Right cardiac atrium (tissue), 5 donors: ENCODE measurements at regions of chr19 and their contacts with region 1.

Region 1: DNA sequence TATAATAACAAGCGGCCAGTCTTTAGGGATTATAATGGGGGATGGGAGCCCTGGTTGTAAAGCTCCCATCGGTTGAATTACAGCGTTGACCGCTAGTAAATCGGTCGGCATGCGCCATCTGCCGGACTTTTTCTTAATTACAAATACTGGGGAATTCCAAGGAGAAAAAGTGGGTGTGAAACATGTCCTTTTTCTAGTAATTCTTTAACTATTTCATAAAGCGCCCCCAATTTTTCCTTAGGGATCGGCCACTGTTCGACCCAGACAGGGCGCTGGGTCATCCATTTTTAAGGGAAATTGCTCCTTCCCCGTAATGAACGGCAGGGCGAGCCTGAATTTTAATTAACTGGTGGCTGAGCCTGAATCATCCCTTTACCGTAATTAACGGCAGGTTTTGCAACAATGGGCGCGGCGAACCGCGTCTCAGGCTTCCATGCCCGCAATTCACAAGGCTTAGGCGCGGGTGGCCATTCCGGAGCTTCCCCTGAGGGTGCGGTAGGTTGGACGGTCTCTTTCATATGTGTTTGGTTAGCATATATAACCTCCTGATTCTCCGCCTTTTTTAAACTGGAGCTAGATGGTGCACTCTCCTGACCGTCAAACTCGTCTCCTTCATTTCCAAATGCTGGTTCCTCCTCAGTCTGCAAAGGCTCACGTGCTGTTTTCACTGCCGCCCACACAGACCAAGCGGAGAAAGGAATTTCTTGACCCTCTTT is 30.2 kb upstream of the EVI5L start:
- DNase-seq: peak; percentile 65 to 75 (median 66)
- ATAC-seq: peak; percentile 70 to 82
- H3K4me3 ChIP-seq: no peak overlapping the region
- H3K27ac ChIP-seq: no peak overlapping the region
- H3K4me1 ChIP-seq: no peaks in the 10 kb centered on the region
- H3K27me3 ChIP-seq: no peaks in the 10 kb centered on the region

Region 2: DNA sequence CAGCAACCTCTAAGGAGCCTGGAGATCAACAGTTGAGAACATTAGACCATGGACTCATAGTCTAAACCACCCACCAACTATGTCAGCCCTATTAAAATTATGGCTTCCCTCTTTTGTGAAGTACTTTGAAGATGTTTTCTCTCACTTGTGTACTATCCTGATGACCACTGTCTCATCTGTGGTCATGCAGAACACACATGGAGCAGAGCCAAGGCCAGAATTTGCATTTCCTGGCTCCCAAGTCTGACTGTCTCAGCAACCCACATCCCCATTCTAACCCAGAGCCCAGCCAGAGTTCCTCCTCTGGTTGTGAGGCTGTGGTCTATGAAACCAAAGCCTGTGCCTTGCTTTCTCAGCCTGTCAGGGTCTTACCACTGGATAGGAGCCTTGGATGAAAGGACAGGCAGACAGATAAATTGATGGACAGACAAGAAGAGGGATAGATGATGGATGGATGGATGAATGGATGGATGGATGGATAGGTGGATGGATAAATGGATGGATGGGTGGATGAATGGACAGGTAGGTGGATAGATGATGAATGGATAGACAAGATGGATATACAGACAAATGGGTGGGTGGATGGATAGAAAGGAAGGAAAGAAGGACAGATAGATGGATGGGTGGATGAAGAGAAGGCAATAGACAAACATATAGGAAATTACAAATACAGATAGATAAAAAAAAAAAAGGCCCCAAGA is 694.9 kb before region 1 on chr19:
- intact Hi-C with region 1: loop called in 1 of 4 experiments (anchors 10 kb)
- DNase-seq: no peak
- ATAC-seq: peak in 1 of 2 donors; percentile 30
- H3K4me3 ChIP-seq: no peak overlapping the region
- H3K27ac ChIP-seq: no peak overlapping the region
- H3K4me1 ChIP-seq: no peaks in the 10 kb centered on the region
- H3K27me3 ChIP-seq: no peaks in the 10 kb centered on the region

Region 3: DNA sequence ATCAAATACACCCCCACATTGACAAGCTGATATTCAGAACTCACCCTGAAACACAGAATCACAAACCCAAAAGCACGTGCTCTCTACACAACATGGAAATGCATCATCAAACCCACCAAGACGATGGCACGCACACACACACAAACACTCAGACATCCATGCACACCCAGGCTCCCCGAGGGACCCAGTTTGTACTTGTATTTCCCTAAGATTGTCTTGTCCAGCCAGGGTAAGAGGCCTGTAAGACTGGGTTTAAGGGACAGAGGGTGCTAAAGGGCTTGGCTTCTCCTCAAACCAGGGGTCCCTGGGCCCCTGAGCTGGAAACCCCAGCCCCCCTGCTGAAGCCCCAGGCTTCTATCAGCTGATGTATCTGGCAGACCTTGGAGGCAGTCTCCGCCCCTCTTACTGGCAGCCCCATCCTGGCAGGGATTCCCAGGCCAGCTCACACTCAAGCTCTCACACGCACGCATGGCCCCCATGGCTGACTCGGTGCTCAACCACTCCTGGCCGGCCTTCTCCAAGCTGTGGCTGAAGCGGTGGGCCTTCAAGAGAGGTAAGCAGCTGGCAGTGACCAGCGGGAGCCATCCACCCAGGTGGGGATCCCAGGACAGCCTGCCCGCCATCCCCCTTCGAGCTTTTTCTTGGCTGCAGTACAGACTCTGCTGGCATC is 444.5 kb before region 1 on chr19:
- intact Hi-C with region 1: loop called in 2 of 4 experiments (anchors 5 to 10 kb)
- DNase-seq: peak; percentile 27 to 67 (median 65)
- ATAC-seq: peak; percentile 30 to 46
- H3K4me3 ChIP-seq: no peak overlapping the region
- H3K27ac ChIP-seq: no peak overlapping the region
- H3K4me1 ChIP-seq: no peaks in the 10 kb centered on the region
- H3K27me3 ChIP-seq: no peaks in the 10 kb centered on the region

Region 4: GRCh38 chr19:7575434-7576040 is 224.3 kb before region 1 on chr19:
- intact Hi-C with region 1: loop called in 1 of 4 experiments (anchors 10 kb)
- DNase-seq: no peak
- ATAC-seq: no peak
- H3K4me3 ChIP-seq: no peak overlapping the region
- H3K27ac ChIP-seq: no peak overlapping the region
- H3K4me1 ChIP-seq: no peaks in the 10 kb centered on the region
- H3K27me3 ChIP-seq: no peaks in the 10 kb centered on the region

Region 5: DNA sequence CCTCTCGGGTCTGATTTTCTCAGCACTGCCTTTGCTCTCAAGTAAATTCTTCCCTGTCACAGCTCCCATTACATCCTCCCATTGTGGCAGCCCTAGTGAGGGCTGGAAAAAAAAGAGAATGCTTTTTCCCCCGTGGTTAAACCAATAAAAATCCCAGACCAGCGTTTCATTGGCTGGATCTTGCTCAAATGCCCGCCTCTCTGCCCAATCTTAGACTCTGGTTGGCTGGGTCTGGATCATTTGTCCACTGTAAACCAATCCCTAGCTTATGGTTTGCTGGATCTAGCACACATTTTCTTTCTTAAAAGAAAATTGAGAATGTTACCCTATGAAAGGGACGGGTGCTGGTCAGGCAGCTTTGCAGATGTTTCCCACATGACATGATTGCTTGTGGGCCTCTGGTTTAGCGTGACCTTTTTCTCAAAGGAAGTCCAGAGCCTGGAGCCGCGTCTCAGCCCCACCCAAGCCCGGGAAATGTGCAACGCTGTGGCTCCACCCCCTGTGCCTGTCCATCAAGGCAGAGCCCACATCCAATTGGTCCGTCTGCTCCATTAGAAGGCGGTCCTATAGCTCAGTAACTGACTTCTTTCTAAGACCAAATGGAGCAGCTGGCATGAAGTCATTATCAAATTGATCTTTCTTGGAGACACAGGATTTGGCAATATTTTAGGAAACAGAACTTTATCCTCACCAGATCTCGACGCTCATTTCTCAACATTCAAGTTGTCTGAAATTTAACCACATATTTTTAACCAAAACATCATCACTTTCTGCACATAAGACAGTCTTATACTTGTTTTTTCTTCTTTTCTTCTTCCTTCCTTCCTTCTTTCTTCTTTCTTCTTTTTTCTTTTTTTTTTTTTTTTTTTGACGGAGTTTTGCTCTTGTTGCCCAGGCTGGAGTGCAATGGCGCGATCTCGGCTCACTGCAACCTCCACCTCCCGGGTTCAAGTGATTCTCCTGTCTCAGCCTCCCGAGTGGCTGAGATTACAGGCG is 125.5 kb before region 1 on chr19:
- intact Hi-C with region 1: loop called in 1 of 4 experiments (anchors 10 kb)
- DNase-seq: peak; percentile 65 to 87 (median 83)
- ATAC-seq: peak; percentile 57 to 93
- H3K4me3 ChIP-seq: no peak overlapping the region
- H3K27ac ChIP-seq: no peak overlapping the region
- H3K4me1 ChIP-seq: no peaks in the 10 kb centered on the region
- H3K27me3 ChIP-seq: no peaks in the 10 kb centered on the region

Region 6: DNA sequence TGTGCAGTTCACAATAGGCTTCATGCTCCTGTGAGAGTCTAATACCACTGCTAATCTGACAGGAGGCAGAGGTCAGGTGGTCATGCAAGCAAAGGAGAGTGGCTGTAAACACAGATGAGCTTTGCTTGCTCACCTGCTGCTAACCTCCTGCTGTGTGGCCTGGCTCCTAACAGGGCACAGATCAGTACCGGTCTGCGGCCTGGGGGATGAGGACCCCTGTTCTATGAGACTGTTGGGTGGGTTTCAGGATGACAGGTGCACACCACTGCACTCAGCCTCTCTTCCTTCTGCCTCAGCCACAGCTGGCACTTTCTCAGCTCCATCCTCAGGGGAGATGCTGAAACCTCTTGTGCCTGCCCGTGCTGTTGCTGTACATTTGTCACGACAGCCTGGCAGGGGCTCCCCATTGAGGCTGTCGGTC is 77.6 kb before region 1 on chr19:
- intact Hi-C with region 1: no loop called
- DNase-seq: no peak
- ATAC-seq: no peak
- H3K4me3 ChIP-seq: no peak overlapping the region
- H3K27ac ChIP-seq: no peak overlapping the region
- H3K4me1 ChIP-seq: no peaks in the 10 kb centered on the region
- H3K27me3 ChIP-seq: no peaks in the 10 kb centered on the region